ENCODE measurements at regions of chr1 and their contacts with region 1.

Region 1: DNA sequence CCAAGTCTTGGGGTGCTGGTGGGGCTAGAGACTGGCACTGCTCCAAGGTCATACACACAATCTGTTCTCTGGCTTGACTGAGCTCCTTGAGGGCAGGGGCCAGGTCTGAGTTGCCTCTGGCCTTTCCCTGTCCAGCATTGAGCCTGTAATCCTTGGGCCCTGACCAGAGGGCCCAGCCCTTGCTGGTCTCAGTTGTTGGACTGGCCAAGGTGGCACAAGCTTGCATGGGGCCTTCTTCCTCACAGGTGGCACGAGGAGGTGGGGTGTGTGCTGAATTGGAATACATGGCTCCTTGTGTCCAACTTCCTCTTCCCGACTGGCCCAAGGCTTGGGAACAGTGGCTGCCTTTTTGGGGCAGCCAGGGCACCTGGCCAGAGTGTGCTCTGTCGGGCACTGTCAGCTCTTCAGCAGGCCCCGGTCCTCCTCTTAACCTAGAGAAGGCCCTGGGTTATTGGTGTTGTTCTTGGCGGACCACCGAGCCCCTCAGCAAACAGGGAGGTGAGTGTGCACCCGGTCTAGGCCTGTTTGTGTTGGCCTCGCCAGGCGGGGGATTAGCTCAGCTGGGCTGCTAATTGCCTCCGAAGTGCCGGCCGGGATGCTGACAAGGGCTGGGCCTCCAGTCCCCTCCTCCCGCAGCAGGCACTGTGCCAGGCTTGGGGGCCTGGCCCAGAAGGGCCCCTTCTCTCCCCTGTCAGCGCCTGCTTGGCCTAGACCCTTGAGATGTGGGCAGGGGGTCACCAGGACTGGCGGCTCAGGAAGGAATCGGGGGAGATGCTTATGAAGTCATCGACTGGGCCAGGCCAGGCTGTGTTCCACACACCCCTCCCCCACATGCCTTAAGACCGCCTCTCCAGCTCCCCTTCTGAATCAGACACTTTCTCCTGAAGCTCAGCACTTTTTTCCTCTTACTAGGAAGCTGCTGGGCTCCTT is 28.5 kb downstream of the WNT4 start:
- DNase-seq: no peak

Region 2: GRCh38 chr1:22416555-22417454 is 302.5 kb after region 1 on chr1:
- intact Hi-C with region 1: loop called in 1 of 2 experiments (anchors 10 kb)
- DNase-seq: peak; percentile 91

Measured in posterior vena cava (tissue), 2 donors.